ENCODE measurements at regions of chr12 and their contacts with region 1.

Region 1: DNA sequence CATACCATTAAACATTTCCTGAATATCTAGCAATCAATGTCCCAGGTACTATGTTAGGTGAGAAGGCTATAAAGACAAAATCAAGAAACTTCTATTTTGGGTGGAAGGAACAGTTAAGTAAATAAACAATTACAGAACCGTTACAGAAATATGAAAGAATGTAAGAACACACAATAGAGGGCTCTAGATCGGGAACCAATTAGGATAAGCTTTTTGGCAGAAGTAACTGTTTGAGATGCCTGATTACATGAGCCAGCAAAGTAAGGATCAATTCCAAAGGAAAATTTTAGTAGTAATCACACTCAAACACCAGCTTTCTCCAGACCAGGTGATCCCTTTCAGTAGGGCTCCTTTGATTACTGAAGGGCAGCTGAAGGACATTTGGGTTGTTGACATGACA is 33.9 kb downstream of the PPP1R12A start:
- DNase-seq: no peak
- H3K4me3 ChIP-seq: no peak overlapping the region
- H3K27ac ChIP-seq: no peak overlapping the region
- H3K4me1 ChIP-seq: no peaks in the 10 kb centered on the region
- H3K27me3 ChIP-seq: no peaks in the 10 kb centered on the region
- CTCF ChIP-seq: no peak
- POLR2A ChIP-seq: no peak

Region 2: DNA sequence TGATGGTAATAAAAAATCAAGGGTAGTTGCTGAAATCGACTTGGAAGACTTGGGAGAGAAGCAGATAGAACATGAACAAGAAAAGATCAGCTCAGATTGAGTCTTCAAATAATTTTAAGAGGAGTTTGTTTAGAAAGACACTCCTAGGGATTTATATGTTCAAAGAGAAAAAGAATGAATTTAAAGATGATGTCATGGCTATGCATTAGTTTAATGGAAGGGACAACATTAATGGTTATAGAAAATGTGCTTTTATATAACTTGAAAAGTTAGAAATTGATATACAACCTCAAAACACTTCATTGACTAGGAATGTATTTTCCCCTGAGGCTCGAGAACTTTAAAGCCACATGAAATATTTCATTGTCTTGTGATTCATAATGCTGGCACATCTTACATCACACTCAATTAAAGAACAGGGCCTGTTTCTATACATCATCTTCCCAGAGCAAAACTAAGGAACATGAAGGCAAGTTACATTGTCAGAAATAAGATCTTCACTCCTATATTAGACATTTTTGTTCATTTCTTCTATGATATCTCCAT is 175.0 kb before region 1 on chr12:
- CTCF ChIA-PET with region 1: no interaction called
- POLR2A ChIA-PET with region 1: no interaction called
- dilution Hi-C with region 1: no loop called
- intact Hi-C with region 1: no loop called
- DNase-seq: no peak
- H3K4me3 ChIP-seq: no peak overlapping the region
- H3K27ac ChIP-seq: no peak overlapping the region
- H3K4me1 ChIP-seq: no peaks in the 10 kb centered on the region
- H3K27me3 ChIP-seq: no peaks in the 10 kb centered on the region
- CTCF ChIP-seq: no peak
- POLR2A ChIP-seq: no peak

Region 3: DNA sequence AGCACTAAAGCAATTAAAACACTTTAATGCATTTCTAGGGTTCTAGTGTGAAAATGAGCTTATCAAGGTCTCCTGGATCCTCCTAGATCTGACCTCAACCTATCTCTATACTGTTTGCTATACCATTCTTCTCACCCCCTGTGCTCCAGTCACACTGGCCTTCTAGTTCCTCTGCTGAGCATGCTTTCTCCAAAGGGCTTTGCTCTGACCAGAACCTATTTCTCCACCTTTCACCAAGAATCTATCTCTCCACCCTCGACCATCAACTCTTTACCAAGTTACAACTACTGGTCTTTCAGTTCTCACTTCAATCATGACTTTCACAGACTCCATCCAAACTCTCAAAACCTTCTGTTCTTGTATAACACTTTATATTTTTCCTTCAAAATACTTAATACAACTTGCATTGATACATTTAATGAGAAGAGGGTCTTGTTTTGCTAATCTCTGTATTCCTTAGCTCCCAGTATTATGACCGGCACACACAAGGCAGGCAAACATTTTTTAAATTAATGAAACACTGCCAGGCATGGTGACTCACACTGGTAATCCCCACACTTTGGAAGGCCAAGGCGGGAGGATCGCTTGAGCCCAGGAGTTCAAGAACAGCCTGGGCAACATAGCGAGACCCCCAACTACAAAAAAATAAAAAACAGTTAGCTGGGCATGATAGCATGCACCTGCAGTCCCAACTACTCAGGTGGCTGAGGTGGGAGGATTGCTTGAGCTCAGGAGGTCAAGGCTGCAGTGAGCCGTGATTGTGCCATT is 11.1 kb after region 1 on chr12:
- CTCF ChIA-PET with region 1: interaction called, 10 read pairs
- POLR2A ChIA-PET with region 1: no interaction called
- dilution Hi-C with region 1: no loop called
- intact Hi-C with region 1: no loop called
- DNase-seq: no peak
- H3K4me3 ChIP-seq: no peak overlapping the region
- H3K27ac ChIP-seq: no peak overlapping the region
- H3K4me1 ChIP-seq: no peaks in the 10 kb centered on the region
- H3K27me3 ChIP-seq: no peaks in the 10 kb centered on the region
- CTCF ChIP-seq: no peak
- POLR2A ChIP-seq: no peak

Region 4: GRCh38 chr12:81668475-81668874 is 1767.5 kb after region 1 on chr12:
- CTCF ChIA-PET with region 1: no interaction called
- POLR2A ChIA-PET with region 1: no interaction called
- dilution Hi-C with region 1: no loop called
- intact Hi-C with region 1: no loop called
- DNase-seq: no peak
- H3K4me3 ChIP-seq: no peak overlapping the region
- H3K27ac ChIP-seq: no peak overlapping the region
- H3K4me1 ChIP-seq: no peaks in the 10 kb centered on the region
- H3K27me3 ChIP-seq: no peaks in the 10 kb centered on the region
- CTCF ChIP-seq: no peak
- POLR2A ChIP-seq: no peak